ENCODE measurements at regions of chr10 and their contacts with region 1.

Region 1: GRCh38 chr10:70758757-70759514 is 26.2 kb downstream of the TBATA start:
- DNase-seq: peak; percentile 17
- ATAC-seq: peak; percentile 80
- H3K4me3 ChIP-seq: no peak overlapping the region
- H3K27ac ChIP-seq: no peak overlapping the region
- H3K4me1 ChIP-seq: no peaks in the 10 kb centered on the region
- H3K27me3 ChIP-seq: no peaks in the 10 kb centered on the region; a peak in 2 of 4 replicates
- CTCF ChIP-seq: peak; percentile 64 to 88 (median 67)
- EP300 ChIP-seq: no peak
- POLR2A ChIP-seq: no peak
- RAD21 ChIP-seq: peak; percentile 88

Region 2: GRCh38 chr10:70549962-70550458 is 208.9 kb before region 1 on chr10:
- CTCF ChIA-PET with region 1: interaction called, 87 read pairs
- POLR2A ChIA-PET with region 1: no interaction called
- RAD21 ChIA-PET with region 1: interaction called, 11 read pairs
- SMC1A ChIA-PET with region 1: interaction called, 45 read pairs
- in situ Hi-C with region 1: loop called (anchors 5 kb)
- intact Hi-C with region 1: loop called (anchors 1 kb)
- DNase-seq: peak; percentile 17
- ATAC-seq: peak; percentile 97
- H3K4me3 ChIP-seq: no peak overlapping the region
- H3K27ac ChIP-seq: no peak overlapping the region
- H3K4me1 ChIP-seq: no peaks in the 10 kb centered on the region
- H3K27me3 ChIP-seq: no peaks in the 10 kb centered on the region
- CTCF ChIP-seq: peak; percentile 87 to 91 (median 91)
- EP300 ChIP-seq: no peak
- POLR2A ChIP-seq: no peak
- RAD21 ChIP-seq: peak; percentile 99

Region 3: DNA sequence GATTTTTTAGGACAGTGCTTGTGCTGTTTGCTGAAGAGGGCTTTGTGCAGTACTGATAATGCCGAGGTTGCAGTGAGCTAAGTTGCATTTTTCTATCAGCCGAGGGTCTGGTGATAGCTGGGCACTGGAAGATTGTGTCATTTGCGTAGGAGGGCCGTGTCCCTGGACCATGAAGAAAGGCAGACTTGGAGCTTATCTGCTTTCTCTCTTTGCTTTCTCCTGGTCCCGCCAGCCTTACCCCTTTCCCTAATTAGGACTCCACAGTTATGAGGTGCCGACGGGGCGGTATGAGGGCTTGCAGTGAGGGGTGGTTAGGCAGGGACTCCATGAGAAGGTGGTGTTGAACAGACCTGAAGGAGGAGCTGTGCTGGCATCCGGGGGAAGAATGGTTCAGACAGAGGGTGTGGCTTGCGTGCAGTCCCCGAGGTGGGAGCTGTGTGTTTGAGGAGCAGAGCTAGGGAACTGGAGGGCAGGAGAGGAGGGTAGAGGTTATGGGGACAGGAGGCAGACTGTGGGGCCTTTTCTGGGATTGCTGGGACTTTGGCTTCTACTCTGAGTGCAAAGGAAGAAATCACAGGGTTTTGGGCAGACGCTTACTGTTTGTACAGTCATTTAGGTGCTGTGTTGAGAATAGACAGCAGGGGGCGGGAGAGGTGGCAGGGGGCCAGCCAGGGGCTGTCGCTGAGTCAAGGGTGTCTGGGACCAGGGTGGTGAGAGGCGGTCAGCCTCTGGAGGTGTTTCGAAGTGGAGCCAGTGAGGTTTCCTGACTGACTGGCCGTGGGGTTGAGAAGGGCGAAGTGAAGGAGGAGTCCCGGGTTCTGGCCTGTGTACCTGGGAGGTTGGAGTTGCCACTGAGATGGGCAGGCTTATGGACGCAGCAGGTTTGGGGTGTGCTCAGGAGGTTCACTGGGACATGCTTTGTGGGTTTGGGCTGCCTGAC is 199.8 kb before region 1 on chr10:
- CTCF ChIA-PET with region 1: interaction called, 87 read pairs
- POLR2A ChIA-PET with region 1: interaction called, 3 read pairs
- RAD21 ChIA-PET with region 1: interaction called, 9 read pairs
- SMC1A ChIA-PET with region 1: interaction called, 6 read pairs
- in situ Hi-C with region 1: no loop called
- intact Hi-C with region 1: loop called (anchors 2 kb)
- DNase-seq: no peak
- ATAC-seq: peak; percentile 79
- H3K4me3 ChIP-seq: no peak overlapping the region
- H3K27ac ChIP-seq: no peak overlapping the region
- H3K4me1 ChIP-seq: no peaks in the 10 kb centered on the region; the same call in 1 of the 2 replicates
- H3K27me3 ChIP-seq: no peaks in the 10 kb centered on the region
- CTCF ChIP-seq: peak; percentile 23 to 35 (median 31); a peak in 3 of 6 replicates
- EP300 ChIP-seq: no peak
- POLR2A ChIP-seq: no peak
- RAD21 ChIP-seq: peak; percentile 55

Region 4: GRCh38 chr10:70619271-70620019 is 139.5 kb before region 1 on chr10:
- CTCF ChIA-PET with region 1: interaction called, 15 read pairs
- POLR2A ChIA-PET with region 1: no interaction called
- RAD21 ChIA-PET with region 1: interaction called, 5 read pairs
- SMC1A ChIA-PET with region 1: interaction called, 13 read pairs
- in situ Hi-C with region 1: no loop called
- intact Hi-C with region 1: loop called (anchors 1 kb)
- DNase-seq: no peak
- ATAC-seq: no peak
- H3K4me3 ChIP-seq: no peak overlapping the region
- H3K27ac ChIP-seq: no peak overlapping the region
- H3K4me1 ChIP-seq: no peaks in the 10 kb centered on the region
- H3K27me3 ChIP-seq: no peaks in the 10 kb centered on the region
- CTCF ChIP-seq: peak in 2 of 3 experiments; percentile 19 to 33; a peak in 2 of 6 replicates
- EP300 ChIP-seq: no peak
- POLR2A ChIP-seq: no peak
- RAD21 ChIP-seq: peak; percentile 43

Region 5: DNA sequence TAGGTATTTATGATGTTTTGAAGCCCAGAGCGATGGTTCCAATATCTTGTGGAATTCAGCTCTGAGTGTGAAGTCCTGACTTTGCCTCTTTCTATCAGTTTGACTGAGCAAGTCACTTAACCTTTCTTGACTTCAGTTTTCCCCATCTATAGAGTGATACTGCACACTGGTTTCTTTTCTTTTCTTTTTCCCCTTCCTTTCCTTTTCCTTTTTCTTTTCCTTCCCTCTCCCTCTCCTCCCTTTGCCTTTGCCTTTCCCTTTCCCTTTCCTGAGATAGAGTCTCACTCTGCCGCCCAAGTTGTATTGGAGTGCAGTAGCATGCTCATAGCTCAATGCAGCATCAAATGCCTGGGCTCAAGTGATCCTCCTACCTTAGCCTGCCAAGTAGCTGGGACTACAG is 77.4 kb after region 1 on chr10:
- CTCF ChIA-PET with region 1: no interaction called
- POLR2A ChIA-PET with region 1: no interaction called
- RAD21 ChIA-PET with region 1: no interaction called
- SMC1A ChIA-PET with region 1: no interaction called
- in situ Hi-C with region 1: no loop called
- intact Hi-C with region 1: no loop called
- DNase-seq: no peak
- ATAC-seq: no peak
- H3K4me3 ChIP-seq: no peak overlapping the region
- H3K27ac ChIP-seq: no peak overlapping the region
- H3K4me1 ChIP-seq: no peaks in the 10 kb centered on the region
- H3K27me3 ChIP-seq: no peaks in the 10 kb centered on the region
- CTCF ChIP-seq: no peak
- EP300 ChIP-seq: no peak
- POLR2A ChIP-seq: no peak
- RAD21 ChIP-seq: no peak

Region 6: DNA sequence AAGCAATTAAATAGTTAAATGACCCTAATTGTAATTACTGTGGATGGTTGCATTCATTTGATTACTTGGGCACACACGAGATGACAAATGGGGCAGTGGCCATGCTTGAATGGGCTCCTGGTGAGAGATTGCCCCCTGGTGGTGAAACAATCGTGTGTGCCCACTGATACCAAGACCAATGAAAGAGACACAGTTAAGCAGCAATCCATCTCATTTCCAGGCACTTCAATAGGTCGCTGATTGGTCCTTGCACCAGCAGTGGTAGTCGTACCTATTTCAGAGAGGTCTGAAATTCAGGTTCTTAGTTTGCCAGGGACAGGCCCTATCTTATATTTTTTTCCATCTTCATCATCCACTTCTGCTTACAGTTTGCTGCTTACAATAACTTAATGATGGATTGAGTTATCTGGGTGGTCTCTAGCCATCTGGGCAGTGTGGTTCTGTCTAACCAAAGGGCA is 121.2 kb after region 1 on chr10:
- CTCF ChIA-PET with region 1: interaction called, 3 read pairs
- POLR2A ChIA-PET with region 1: no interaction called
- RAD21 ChIA-PET with region 1: no interaction called
- SMC1A ChIA-PET with region 1: no interaction called
- in situ Hi-C with region 1: no loop called
- intact Hi-C with region 1: loop called (anchors 5 kb)
- DNase-seq: peak; percentile 32
- ATAC-seq: peak; percentile 100
- H3K4me3 ChIP-seq: no peak overlapping the region
- H3K27ac ChIP-seq: no peak overlapping the region
- H3K4me1 ChIP-seq: no peaks in the 10 kb centered on the region
- H3K27me3 ChIP-seq: no peaks in the 10 kb centered on the region
- CTCF ChIP-seq: peak; percentile 85 to 92 (median 89); a peak in 5 of 6 replicates
- EP300 ChIP-seq: no peak
- POLR2A ChIP-seq: no peak
- RAD21 ChIP-seq: peak; percentile 90

Region 7: GRCh38 chr10:70903262-70903921 is 144.5 kb after region 1 on chr10:
- CTCF ChIA-PET with region 1: no interaction called
- POLR2A ChIA-PET with region 1: no interaction called
- RAD21 ChIA-PET with region 1: no interaction called
- SMC1A ChIA-PET with region 1: no interaction called
- in situ Hi-C with region 1: no loop called
- intact Hi-C with region 1: no loop called
- DNase-seq: no peak
- ATAC-seq: peak; percentile 64
- H3K4me3 ChIP-seq: no peak overlapping the region
- H3K27ac ChIP-seq: no peak overlapping the region
- H3K4me1 ChIP-seq: no peaks in the 10 kb centered on the region
- H3K27me3 ChIP-seq: peaks cover 2% of the 10 kb centered on the region in 2 experiments; a peak in 1 of 4 replicates
- CTCF ChIP-seq: peak; percentile 76 to 87 (median 82)
- EP300 ChIP-seq: no peak
- POLR2A ChIP-seq: no peak
- RAD21 ChIP-seq: peak; percentile 78

Measured in GM12878 (cell line).